Posterior cingulate gyrus (tissue), 11 donors: ENCODE measurements at regions of chr4 and their contacts with region 1.

Region 1: DNA sequence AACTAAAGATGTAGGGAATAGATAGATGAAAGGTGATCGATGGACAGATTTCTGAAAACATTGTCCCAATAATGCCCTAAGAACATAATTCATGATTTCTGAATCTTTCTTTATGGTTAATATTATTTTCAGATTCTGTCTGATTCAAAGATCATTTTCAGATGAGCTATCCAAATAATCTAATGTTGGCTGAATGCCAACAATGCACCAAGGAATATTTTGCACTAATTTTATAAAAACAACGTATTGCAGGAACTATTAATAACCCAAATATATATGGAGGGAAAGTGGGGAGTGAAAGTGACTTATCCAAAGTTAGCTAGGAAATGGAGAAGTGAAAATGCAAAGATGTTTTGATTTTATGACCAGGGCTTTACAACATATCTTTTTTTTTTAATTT is 1675.5 kb downstream of the STIM2 start:
- DNase-seq: no peak

Region 2: GRCh38 chr4:28443798-28444412 is 92.2 kb before region 1 on chr4:
- intact Hi-C with region 1: no loop called
- DNase-seq: peak in 4 of 10 donors; percentile 8 to 49 (median 26)

Region 3: GRCh38 chr4:28600958-28601357 is 64.8 kb after region 1 on chr4:
- intact Hi-C with region 1: loop called (anchors 10 kb)
- DNase-seq: no peak